HEK293T (cell line): ENCODE measurements at regions of chr5 and their contacts with region 1.

Region 1: GRCh38 chr5:13480829-13481228 is 463.7 kb downstream of the DNAH5 start:
- DNase-seq: no peak

Region 2: GRCh38 chr5:13179407-13180087 is 301.3 kb before region 1 on chr5:
- CTCF ChIA-PET with region 1: no interaction called
- POLR2A ChIA-PET with region 1: no interaction called
- DNase-seq: no peak

Region 3: GRCh38 chr5:13498113-13498678 is 17.4 kb after region 1 on chr5:
- CTCF ChIA-PET with region 1: interaction called, 12 read pairs
- POLR2A ChIA-PET with region 1: no interaction called
- DNase-seq: no peak